Naive thymus-derived CD4-positive, alpha-beta T cell (primary cell): ENCODE measurements at regions of chr1 and their contacts with region 1.

Region 1: DNA sequence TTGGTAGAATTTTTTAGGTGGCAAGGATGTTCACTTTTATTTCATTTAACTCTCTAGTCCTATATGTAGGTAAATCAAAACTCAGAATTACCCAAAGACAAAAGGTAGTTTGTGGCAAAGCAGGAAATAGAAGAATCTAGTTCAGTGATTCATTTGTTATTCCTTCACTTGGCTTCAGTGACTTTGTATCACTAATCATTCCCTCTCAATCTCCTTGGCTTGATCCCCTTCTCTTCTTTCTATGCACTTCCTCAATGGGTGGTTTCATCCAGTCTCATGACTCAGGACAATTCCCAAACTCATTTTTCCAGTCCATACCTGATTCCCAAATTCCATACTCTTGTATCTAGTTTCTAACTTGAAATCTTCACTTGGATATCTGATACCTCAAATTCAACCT is 64.9 kb downstream of the PRKACB start:
- DNase-seq: no peak
- ATAC-seq: no peak
- H3K4me3 ChIP-seq: no peak overlapping the region
- H3K4me3 Mint-ChIP-seq: no peak overlapping the region
- H3K27ac ChIP-seq: no peak overlapping the region
- H3K27ac Mint-ChIP-seq: peak overlapping the region in 6 of 9 donors; percentile 7 to 87 (median 19)
- H3K4me1 ChIP-seq: no peaks in the 10 kb centered on the region
- H3K4me1 Mint-ChIP-seq: peaks cover 4 to 55% (median 38%) of the 10 kb centered on the region in 7 donors
- H3K27me3 ChIP-seq: no peaks in the 10 kb centered on the region
- H3K27me3 Mint-ChIP-seq: no peaks in the 10 kb centered on the region

Region 2: DNA sequence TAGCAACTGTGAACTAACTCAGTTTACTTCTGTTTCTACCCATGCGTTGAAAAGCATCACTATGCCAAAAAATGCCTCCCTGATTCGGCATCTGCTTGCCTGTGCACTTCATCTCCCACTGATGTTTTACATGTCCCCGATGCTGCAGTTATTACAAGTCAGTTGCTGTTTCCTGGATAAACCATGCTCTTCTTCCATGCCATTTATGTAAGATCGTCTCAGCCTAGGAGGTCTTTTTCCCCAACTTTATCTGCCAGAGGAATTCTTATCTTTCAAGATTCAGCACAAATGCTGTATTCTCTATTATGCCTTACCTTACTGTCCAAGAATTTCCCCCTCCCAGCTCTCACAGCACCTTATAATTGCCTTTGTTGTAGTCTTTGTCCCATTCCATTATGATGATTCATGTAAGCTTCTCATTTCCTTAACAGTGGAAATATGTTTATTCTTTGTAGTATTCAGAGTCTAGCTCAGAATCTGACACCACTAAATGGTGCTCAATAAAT is 34.8 kb before region 1 on chr1:
- CTCF ChIA-PET with region 1: no interaction called
- POLR2A ChIA-PET with region 1: no interaction called
- intact Hi-C with region 1: loop called in 1 of 2 experiments (anchors 5 kb)
- DNase-seq: no peak
- ATAC-seq: no peak
- H3K4me3 ChIP-seq: no peak overlapping the region
- H3K4me3 Mint-ChIP-seq: peak overlapping the region in 8 of 10 donors; percentile 1 to 49 (median 31)
- H3K27ac ChIP-seq: no peak overlapping the region
- H3K27ac Mint-ChIP-seq: peak overlapping the region in 5 of 9 donors; percentile 5 to 51 (median 8)
- H3K4me1 ChIP-seq: peaks cover 2 to 27% of the 10 kb centered on the region in 2 donors
- H3K4me1 Mint-ChIP-seq: peaks cover 13 to 83% (median 72%) of the 10 kb centered on the region in 7 donors
- H3K27me3 ChIP-seq: no peaks in the 10 kb centered on the region
- H3K27me3 Mint-ChIP-seq: no peaks in the 10 kb centered on the region

Region 3: DNA sequence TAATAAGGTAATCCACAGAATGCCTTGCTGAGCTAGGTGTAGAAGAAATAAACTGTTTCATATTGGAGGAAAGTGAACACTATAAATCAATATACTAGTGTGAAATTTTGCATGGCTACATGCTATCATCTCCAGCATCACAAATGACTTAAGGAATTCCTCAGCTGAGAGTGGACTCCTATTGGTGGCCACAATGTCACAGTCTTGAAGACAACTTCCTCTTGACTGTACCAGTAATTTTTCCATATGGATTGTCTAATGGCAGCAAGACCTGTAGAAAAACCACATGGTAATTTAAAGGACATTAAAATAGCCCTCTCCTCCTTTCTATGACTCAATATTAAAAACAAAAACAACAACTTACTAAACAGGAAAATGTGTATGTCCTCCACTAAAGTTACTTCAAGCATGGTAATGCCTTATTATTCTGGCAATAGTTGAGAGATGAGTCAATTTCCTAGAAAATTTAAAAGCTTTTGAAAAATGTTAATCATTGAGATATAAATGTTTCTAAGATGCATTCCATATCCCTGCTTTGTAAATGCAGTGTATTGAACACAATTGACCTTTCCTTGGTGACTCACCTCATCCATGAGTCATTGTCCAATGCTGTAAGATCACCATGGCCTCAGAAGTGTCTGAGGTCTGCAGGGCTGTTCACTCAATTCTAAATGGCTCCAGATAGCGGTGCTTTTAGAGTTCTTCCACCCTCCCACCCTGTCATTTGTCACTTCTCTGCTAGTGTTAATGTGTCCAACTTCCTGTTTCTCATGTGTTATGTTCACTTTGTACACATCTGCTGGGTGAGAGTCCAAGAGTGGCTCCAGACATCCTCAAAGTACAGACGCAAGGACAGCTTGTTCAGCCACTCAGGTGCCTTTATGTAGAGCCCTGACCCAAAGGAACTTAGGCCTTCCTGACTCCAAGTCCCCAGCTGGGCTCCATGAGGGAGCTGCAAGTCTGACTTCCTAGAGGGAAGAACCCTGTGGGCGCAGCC is 156.6 kb after region 1 on chr1:
- CTCF ChIA-PET with region 1: no interaction called
- POLR2A ChIA-PET with region 1: no interaction called
- intact Hi-C with region 1: no loop called
- DNase-seq: no peak
- ATAC-seq: peak; percentile 80
- H3K4me3 ChIP-seq: no peak overlapping the region
- H3K4me3 Mint-ChIP-seq: no peak overlapping the region
- H3K27ac ChIP-seq: no peak overlapping the region
- H3K27ac Mint-ChIP-seq: no peak overlapping the region
- H3K4me1 ChIP-seq: no peaks in the 10 kb centered on the region
- H3K4me1 Mint-ChIP-seq: peaks cover 0 to 17% (median 8%) of the 10 kb centered on the region in 7 donors
- H3K27me3 ChIP-seq: no peaks in the 10 kb centered on the region
- H3K27me3 Mint-ChIP-seq: no peaks in the 10 kb centered on the region